ENCODE measurements at regions of chr7 and their contacts with region 1.

Region 1: DNA sequence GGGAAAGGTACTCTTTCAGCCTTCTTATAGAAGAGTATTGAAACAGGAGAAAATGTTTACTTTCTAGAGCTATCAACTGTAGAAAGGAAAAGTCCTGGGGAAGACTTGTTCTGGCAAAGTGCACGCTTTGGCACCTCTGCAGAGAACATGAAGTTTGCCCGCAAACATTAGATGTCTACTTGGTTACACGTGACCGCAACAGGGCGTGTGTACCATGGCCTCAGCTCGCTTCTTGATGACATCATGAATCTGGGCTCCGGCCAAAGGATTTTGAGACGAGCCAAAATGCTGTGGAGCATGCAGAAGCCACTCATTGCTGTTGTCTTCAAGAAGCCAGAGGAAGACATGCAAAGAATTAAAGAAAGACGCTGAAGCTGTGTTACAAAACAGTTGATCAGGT is 8.6 kb upstream of the TAS2R60 start:
- DNase-seq: peak; percentile 41
- ATAC-seq: no peak; the same call in 1 of the 2 replicates
- H3K4me3 ChIP-seq: no peak overlapping the region
- H3K27ac ChIP-seq: no peak overlapping the region
- H3K4me1 ChIP-seq: peaks cover 6% of the 10 kb centered on the region
- H3K27me3 ChIP-seq: no peaks in the 10 kb centered on the region
- CTCF ChIP-seq: no peak
- POLR2A ChIP-seq: no peak
- RAD21 ChIP-seq: no peak

Region 2: DNA sequence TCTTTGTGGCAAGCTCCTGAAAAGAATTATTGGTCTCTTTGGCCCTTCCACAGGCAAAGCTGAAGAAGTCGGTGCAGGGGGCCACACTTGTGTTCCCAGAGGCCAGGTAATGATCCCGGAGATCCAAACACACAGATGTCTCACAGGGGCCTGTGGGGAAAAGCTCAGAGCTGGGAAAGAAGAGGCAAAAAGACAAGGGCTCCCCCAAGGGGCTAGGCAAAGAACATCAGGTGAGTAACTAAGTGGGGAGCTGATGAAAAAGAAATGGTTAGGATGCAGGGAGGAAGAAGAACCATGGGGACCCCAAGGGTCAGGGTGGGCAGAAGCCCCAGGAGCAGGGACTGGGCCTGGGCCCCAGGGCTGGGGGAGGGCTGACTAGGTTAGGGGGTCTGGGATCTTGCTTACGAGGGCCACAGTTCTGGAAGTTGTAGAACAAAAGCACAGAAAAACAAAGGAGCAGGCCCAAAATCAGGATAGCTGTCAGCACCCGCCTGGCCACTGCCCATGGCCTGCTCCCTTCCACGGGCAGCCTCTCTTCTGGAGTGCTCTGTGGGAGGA is 473.6 kb before region 1 on chr7:
- CTCF ChIA-PET with region 1: no interaction called
- POLR2A ChIA-PET with region 1: no interaction called
- dilution Hi-C with region 1: no loop called
- in situ Hi-C with region 1: no loop called
- intact Hi-C with region 1: no loop called
- DNase-seq: no peak
- ATAC-seq: no peak
- H3K4me3 ChIP-seq: no peak overlapping the region
- H3K27ac ChIP-seq: no peak overlapping the region
- H3K4me1 ChIP-seq: no peaks in the 10 kb centered on the region
- H3K27me3 ChIP-seq: no peaks in the 10 kb centered on the region
- CTCF ChIP-seq: no peak
- POLR2A ChIP-seq: no peak
- RAD21 ChIP-seq: no peak

Region 3: DNA sequence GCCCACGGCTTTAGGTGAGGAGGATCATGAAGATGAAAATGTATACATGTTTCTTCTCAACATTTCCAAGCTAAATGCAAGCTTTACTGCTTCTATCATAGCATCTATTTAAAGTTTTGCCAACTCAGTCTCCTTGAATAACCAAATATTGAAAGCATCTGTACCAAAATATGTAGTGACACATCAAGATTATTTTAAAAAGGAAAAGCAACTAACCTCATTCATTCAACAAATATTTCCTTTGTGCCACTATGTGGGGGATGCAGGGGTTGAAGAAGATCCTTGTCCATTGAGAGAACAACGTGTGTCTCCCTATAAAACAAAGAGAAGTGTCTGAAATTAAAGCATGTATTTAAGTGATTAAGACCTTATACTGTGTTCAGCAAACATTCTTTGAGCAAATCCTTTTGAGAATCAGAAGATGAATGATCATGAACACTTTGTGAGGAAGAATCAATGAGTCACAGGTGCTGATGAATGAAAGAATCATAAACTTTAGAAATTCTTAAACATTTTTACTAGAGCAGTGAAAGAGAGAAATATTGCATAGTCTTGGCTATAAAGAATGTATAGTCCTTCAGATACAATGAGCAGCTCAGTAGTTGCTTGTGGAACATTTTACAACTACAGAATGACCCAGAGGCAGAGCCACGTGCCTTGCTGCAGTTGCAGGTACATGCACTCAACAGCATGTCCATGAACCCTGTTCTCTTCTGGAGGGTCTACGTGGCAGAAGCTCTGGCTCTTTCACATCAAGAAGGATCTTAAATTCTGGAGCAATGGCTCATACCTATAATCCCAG is 22.5 kb after region 1 on chr7:
- CTCF ChIA-PET with region 1: no interaction called
- POLR2A ChIA-PET with region 1: no interaction called
- dilution Hi-C with region 1: no loop called
- in situ Hi-C with region 1: no loop called
- intact Hi-C with region 1: loop called (anchors 2 kb)
- DNase-seq: peak; percentile 67
- ATAC-seq: peak; percentile 69
- H3K4me3 ChIP-seq: no peak overlapping the region
- H3K27ac ChIP-seq: peak overlapping the region; percentile 81
- H3K4me1 ChIP-seq: peaks cover 16% of the 10 kb centered on the region
- H3K27me3 ChIP-seq: no peaks in the 10 kb centered on the region
- CTCF ChIP-seq: no peak
- POLR2A ChIP-seq: no peak
- RAD21 ChIP-seq: no peak

Region 4: GRCh38 chr7:143484119-143484518 is 49.5 kb after region 1 on chr7:
- CTCF ChIA-PET with region 1: no interaction called
- POLR2A ChIA-PET with region 1: no interaction called
- dilution Hi-C with region 1: no loop called
- in situ Hi-C with region 1: no loop called
- intact Hi-C with region 1: loop called (anchors 5 kb)
- DNase-seq: peak; percentile 21
- ATAC-seq: peak; percentile 56
- H3K4me3 ChIP-seq: no peak overlapping the region
- H3K27ac ChIP-seq: no peak overlapping the region
- H3K4me1 ChIP-seq: peaks cover 4% of the 10 kb centered on the region
- H3K27me3 ChIP-seq: no peaks in the 10 kb centered on the region
- CTCF ChIP-seq: no peak
- POLR2A ChIP-seq: no peak
- RAD21 ChIP-seq: no peak